ENCODE measurements at regions of chr20 and their contacts with region 1.

Region 1: GRCh38 chr20:37042986-37043972 is 52.5 kb downstream of the RBL1 start:
- DNase-seq: peak; percentile 21
- H3K4me3 Mint-ChIP-seq: peak overlapping the region; percentile 19
- H3K27ac Mint-ChIP-seq: peak overlapping the region; percentile 60
- H3K4me1 Mint-ChIP-seq: peaks cover 25% of the 10 kb centered on the region
- H3K27me3 Mint-ChIP-seq: no peaks in the 10 kb centered on the region

Region 2: DNA sequence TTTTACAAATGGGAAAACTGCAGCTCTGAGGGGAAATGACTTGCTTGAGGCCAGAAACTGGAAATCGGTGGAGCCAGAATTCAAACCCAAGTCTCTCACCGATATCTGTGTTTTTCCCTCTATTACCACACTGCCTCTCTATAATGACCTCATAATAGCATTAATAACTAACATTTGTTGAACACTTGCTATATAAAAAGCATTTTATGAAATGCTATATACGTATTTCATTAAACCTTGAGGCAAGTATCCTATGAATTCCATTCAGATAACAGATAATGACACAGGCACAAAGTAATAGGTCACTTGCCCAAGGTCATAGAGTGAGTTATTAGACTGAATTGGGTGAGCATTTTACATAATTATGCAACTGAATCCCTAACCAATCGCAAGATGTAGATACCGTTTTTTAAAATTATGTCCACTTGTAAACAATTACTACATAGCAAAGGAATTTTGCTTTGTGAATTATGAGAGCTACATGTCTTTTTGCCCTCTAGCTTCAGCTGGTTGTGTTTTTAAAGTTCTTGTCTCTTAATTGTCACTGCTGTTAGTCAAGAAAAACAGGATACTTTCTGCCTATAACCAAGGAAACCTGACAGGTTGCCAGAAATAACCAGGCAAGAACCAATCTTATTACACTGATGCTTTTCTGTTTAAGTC is 274.4 kb before region 1 on chr20:
- CTCF ChIA-PET with region 1: no interaction called
- intact Hi-C with region 1: no loop called
- DNase-seq: no peak
- H3K4me3 Mint-ChIP-seq: no peak overlapping the region
- H3K27ac Mint-ChIP-seq: no peak overlapping the region
- H3K4me1 Mint-ChIP-seq: peaks cover 19% of the 10 kb centered on the region
- H3K27me3 Mint-ChIP-seq: no peaks in the 10 kb centered on the region

Region 3: DNA sequence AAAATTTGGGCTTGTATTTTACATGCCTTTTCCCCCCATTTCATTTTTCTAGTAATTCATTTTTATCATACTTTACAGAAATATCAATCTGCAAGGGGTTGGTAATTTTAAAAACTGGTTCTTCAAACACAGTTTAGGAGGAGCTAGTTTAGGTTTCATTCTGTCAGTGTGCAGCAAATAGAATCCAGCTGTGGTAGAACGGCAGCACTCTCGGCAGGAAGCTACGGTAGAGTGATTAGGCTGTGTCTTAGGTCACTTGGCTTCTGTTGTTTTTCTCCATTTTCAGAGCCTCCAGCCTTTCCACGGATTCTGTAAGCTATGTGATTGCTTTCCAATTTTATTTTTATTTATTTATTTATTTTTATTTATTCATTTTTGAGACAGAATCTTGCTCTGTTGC is 134.7 kb before region 1 on chr20:
- CTCF ChIA-PET with region 1: no interaction called
- intact Hi-C with region 1: no loop called
- DNase-seq: no peak
- H3K4me3 Mint-ChIP-seq: no peak overlapping the region
- H3K27ac Mint-ChIP-seq: no peak overlapping the region
- H3K4me1 Mint-ChIP-seq: peaks cover 16% of the 10 kb centered on the region
- H3K27me3 Mint-ChIP-seq: no peaks in the 10 kb centered on the region

Region 4: GRCh38 chr20:37020636-37021035 is 22.6 kb before region 1 on chr20:
- CTCF ChIA-PET with region 1: no interaction called
- intact Hi-C with region 1: loop called (anchors 2 kb)
- DNase-seq: no peak
- H3K4me3 Mint-ChIP-seq: no peak overlapping the region
- H3K27ac Mint-ChIP-seq: no peak overlapping the region
- H3K4me1 Mint-ChIP-seq: peaks cover 24% of the 10 kb centered on the region
- H3K27me3 Mint-ChIP-seq: no peaks in the 10 kb centered on the region

Measured in activated naive CD4-positive, alpha-beta T cell treated with anti-CD3 and anti-CD28 coated beads for 36 hours (primary cell).